ENCODE measurements at regions of chr18 and their contacts with region 1.

Region 1: GRCh38 chr18:3665780-3666525 is 216.0 kb downstream of the TGIF1 start:
- DNase-seq: peak; percentile 90
- H3K4me3 ChIP-seq: peak overlapping the region in 1 of 3 experiments; percentile 34
- H3K27ac ChIP-seq: peak overlapping the region; percentile 90
- H3K4me1 ChIP-seq: peaks cover 16% of the 10 kb centered on the region
- H3K27me3 ChIP-seq: no peaks in the 10 kb centered on the region
- CTCF ChIP-seq: peak; percentile 86 to 91
- POLR2A ChIP-seq: no peak

Region 2: DNA sequence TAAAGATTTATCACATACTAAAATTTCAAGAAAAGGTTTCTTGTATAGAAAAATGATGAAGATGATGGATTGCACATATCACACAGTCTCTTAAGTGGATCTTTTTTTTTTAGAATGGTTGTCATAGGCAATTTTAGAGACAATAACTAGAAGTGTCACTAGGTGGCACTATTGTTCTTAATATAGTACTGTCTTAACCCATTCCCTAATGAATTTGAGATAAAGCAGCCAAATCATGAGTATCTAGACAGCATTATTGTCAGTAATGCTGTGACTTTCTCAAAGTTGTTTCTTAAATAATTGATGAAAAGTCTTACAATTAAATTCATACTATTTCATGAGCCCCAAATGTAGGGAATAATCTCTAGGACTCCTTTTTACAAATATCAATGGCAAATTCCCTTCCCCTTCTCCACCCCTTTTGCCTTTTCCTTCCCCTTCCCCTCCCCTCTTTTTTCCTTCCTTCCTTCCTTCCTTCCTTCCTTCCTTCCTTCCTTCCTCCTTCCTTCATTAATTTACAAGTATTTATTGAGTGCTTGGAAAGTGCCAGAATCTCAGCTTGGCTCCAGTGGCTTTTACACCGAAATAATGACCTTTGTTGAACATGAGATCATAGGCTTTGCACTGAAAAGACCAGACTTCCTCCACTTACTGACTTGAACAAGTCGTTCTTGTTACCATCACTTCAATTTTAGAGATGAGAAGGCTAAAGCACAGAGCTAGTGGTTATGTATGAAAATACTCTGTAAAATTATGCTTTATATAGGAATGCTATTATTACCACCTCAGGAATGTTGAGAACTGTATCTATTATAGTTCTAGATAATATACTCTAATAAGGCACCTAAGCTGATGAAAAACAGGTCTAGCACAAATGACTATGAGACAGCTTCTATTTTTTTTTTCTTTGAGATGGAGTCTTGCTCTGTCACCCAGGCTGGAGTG is 384.2 kb before region 1 on chr18:
- CTCF ChIA-PET with region 1: interaction called, 87 read pairs
- POLR2A ChIA-PET with region 1: interaction called, 4 read pairs
- dilution Hi-C with region 1: no loop called
- intact Hi-C with region 1: loop called (anchors 1 kb)
- DNase-seq: peak; percentile 91
- H3K4me3 ChIP-seq: no peak overlapping the region
- H3K27ac ChIP-seq: peak overlapping the region; percentile 84
- H3K4me1 ChIP-seq: peaks cover 38% of the 10 kb centered on the region
- H3K27me3 ChIP-seq: no peaks in the 10 kb centered on the region
- CTCF ChIP-seq: peak; percentile 6 to 21
- POLR2A ChIP-seq: no peak

Region 3: GRCh38 chr18:3447895-3448837 is 217.8 kb before region 1 on chr18:
- CTCF ChIA-PET with region 1: interaction called, 58 read pairs
- POLR2A ChIA-PET with region 1: interaction called, 6 read pairs
- dilution Hi-C with region 1: no loop called
- intact Hi-C with region 1: no loop called
- DNase-seq: peak; percentile 99
- H3K4me3 ChIP-seq: peak overlapping the region; percentile 59 to 90 (median 81)
- H3K27ac ChIP-seq: peak overlapping the region; percentile 99
- H3K4me1 ChIP-seq: peaks cover 21% of the 10 kb centered on the region
- H3K27me3 ChIP-seq: no peaks in the 10 kb centered on the region
- CTCF ChIP-seq: peak in 1 of 2 donors; percentile 13
- POLR2A ChIP-seq: peak; percentile 80

Region 4: GRCh38 chr18:3593904-3594661 is 71.9 kb before region 1 on chr18:
- CTCF ChIA-PET with region 1: interaction called, 154 read pairs
- POLR2A ChIA-PET with region 1: interaction called, 22 read pairs
- dilution Hi-C with region 1: no loop called
- intact Hi-C with region 1: loop called (anchors 1 kb)
- DNase-seq: peak; percentile 98
- H3K4me3 ChIP-seq: peak overlapping the region; percentile 8 to 93 (median 48)
- H3K27ac ChIP-seq: peak overlapping the region; percentile 100
- H3K4me1 ChIP-seq: peaks cover 48% of the 10 kb centered on the region
- H3K27me3 ChIP-seq: no peaks in the 10 kb centered on the region
- CTCF ChIP-seq: peak; percentile 62 to 80
- POLR2A ChIP-seq: peak; percentile 81

Region 5: DNA sequence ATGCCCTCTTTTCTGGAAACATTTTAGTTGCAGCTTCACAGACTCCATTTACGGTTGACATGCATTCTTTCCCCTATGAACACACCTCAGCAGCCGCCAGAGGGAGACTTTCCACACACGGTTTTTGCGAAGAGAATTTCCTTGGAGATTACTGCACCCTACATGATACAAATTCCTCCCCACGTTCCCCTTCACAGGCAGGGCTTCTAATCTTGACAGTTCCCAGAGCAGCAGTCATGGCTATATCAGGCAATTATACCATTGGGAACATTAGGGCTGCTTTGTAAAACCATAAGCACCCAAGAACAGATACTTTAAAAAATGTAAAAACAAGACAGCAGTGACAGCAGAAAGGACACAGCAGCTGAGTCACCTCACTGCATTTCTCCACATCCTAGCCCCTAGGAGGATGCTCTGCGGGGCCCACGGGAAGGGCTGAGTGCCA is 37.8 kb after region 1 on chr18:
- CTCF ChIA-PET with region 1: interaction called, 18 read pairs
- POLR2A ChIA-PET with region 1: no interaction called
- dilution Hi-C with region 1: no loop called
- intact Hi-C with region 1: no loop called
- DNase-seq: peak; percentile 65
- H3K4me3 ChIP-seq: no peak overlapping the region
- H3K27ac ChIP-seq: no peak overlapping the region
- H3K4me1 ChIP-seq: peaks cover 2% of the 10 kb centered on the region
- H3K27me3 ChIP-seq: no peaks in the 10 kb centered on the region
- CTCF ChIP-seq: peak; percentile 65 to 70
- POLR2A ChIP-seq: no peak

Region 6: GRCh38 chr18:3875961-3876360 is 210.0 kb after region 1 on chr18:
- CTCF ChIA-PET with region 1: interaction called, 110 read pairs
- POLR2A ChIA-PET with region 1: no interaction called
- dilution Hi-C with region 1: no loop called
- intact Hi-C with region 1: no loop called
- DNase-seq: no peak
- H3K4me3 ChIP-seq: no peak overlapping the region
- H3K27ac ChIP-seq: no peak overlapping the region
- H3K4me1 ChIP-seq: no peaks in the 10 kb centered on the region
- H3K27me3 ChIP-seq: peaks cover 8 to 28% of the 10 kb centered on the region in 2 experiments
- CTCF ChIP-seq: no peak
- POLR2A ChIP-seq: no peak

Region 7: GRCh38 chr18:4024702-4025101 is 358.7 kb after region 1 on chr18:
- CTCF ChIA-PET with region 1: no interaction called
- POLR2A ChIA-PET with region 1: no interaction called
- dilution Hi-C with region 1: no loop called
- intact Hi-C with region 1: no loop called
- DNase-seq: no peak
- H3K4me3 ChIP-seq: no peak overlapping the region
- H3K27ac ChIP-seq: no peak overlapping the region
- H3K4me1 ChIP-seq: no peaks in the 10 kb centered on the region
- H3K27me3 ChIP-seq: no peaks in the 10 kb centered on the region
- CTCF ChIP-seq: no peak
- POLR2A ChIP-seq: no peak

Measured in endothelial cell of umbilical vein (primary cell).